Heart left ventricle (tissue), 16 donors: ENCODE measurements at regions of chr16 and their contacts with region 1.

Region 1: GRCh38 chr16:50806099-50807062 is 64.5 kb downstream of the CYLD start:
- DNase-seq: peak; percentile 75 to 83 (median 82)
- ATAC-seq: peak; percentile 85 to 95 (median 92)
- H3K4me3 ChIP-seq: peak overlapping the region in 10 of 12 donors; percentile 21 to 50 (median 39)
- H3K27ac ChIP-seq: peak overlapping the region in 5 of 12 donors; percentile 37 to 68 (median 44)
- H3K4me1 ChIP-seq: peaks cover 0 to 9% (median 3%) of the 10 kb centered on the region in 12 donors
- H3K27me3 ChIP-seq: no peaks in the 10 kb centered on the region
- CTCF ChIP-seq: peak; percentile 84 to 98 (median 94)
- POLR2A ChIP-seq: no peak

Region 2: GRCh38 chr16:50210266-50211038 is 595.9 kb before region 1 on chr16:
- intact Hi-C with region 1: loop called in 3 of 10 experiments (anchors 10 kb)
- DNase-seq: peak; percentile 81 to 89 (median 82)
- ATAC-seq: peak; percentile 92 to 95 (median 94)
- H3K4me3 ChIP-seq: no peak overlapping the region
- H3K27ac ChIP-seq: peak overlapping the region in 3 of 12 donors; percentile 17 to 48 (median 40)
- H3K4me1 ChIP-seq: peaks cover 2 to 54% (median 37%) of the 10 kb centered on the region in 12 donors
- H3K27me3 ChIP-seq: no peaks in the 10 kb centered on the region
- CTCF ChIP-seq: peak; percentile 52 to 88 (median 71)
- POLR2A ChIP-seq: no peak

Region 3: GRCh38 chr16:50368410-50369132 is 437.8 kb before region 1 on chr16 and contains the start of gene BRD7:
- intact Hi-C with region 1: loop called in 4 of 10 experiments (anchors 10 kb)
- DNase-seq: peak; percentile 54 to 85 (median 70)
- ATAC-seq: peak; percentile 34 to 85 (median 68)
- H3K4me3 ChIP-seq: peak within 1 kb of the TSS; percentile 78 to 99 (median 96)
- H3K27ac ChIP-seq: peak within 1 kb of the TSS in 11 of 12 donors; percentile 39 to 82 (median 65)
- H3K4me1 ChIP-seq: peaks cover 7 to 48% (median 22%) of the 10 kb centered on the region in 12 donors
- H3K27me3 ChIP-seq: no peaks in the 10 kb centered on the region
- CTCF ChIP-seq: peak in 10 of 12 donors; percentile 33 to 76 (median 60)
- POLR2A ChIP-seq: no peak
- total RNA-seq, gene BRD7: 29.8 to 49.7 (median 45.3) TPM

Region 4: DNA sequence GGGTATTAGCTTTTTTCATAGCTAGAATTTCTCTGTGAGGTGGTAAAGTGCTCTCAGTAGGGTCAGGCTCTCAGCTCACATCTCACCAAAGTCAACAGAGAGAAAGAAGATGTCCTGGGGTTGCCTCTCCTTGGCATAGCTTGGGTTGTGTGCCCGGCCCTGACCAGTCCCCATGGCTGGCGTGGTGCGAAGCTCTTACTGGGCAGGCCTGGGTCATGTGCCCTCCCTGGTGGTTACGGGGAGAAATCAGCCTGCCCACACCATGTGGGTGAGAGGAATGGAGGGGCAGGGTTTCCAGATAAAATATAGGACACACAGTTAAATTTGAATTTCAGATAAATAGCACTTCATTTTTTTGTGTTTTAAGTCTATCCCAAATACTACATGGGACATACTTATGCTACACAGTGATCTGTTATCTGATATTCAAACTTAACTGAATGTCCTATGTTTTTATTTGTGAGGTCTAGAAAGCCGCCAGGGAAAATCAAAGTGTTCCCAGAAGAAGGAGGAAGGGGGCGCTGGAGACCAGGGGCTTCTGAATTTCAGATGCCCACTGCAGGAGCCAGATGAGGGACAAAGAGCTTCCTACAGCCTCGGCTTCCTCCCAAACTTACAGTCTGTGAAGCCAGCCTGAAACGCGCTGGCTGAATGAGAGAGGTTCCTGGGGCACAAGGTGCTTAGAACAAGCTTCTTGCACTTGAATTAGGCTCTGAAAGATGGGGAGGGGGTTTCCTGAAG is 212.8 kb before region 1 on chr16:
- intact Hi-C with region 1: loop called in 4 of 10 experiments (anchors 5 to 10 kb)
- DNase-seq: peak in 1 of 5 donors; percentile 41
- ATAC-seq: no peak
- H3K4me3 ChIP-seq: no peak overlapping the region
- H3K27ac ChIP-seq: peak overlapping the region in 1 of 12 donors; percentile 53
- H3K4me1 ChIP-seq: peaks cover 0 to 19% (median 10%) of the 10 kb centered on the region in 12 donors
- H3K27me3 ChIP-seq: no peaks in the 10 kb centered on the region
- CTCF ChIP-seq: peak in 9 of 12 donors; percentile 15 to 51 (median 39)
- POLR2A ChIP-seq: no peak

Region 5: GRCh38 chr16:50603206-50604064 is 202.9 kb before region 1 on chr16:
- intact Hi-C with region 1: loop called in 3 of 10 experiments (anchors 10 kb)
- DNase-seq: peak in 1 of 5 donors; percentile 49
- ATAC-seq: peak; percentile 64 to 93 (median 76)
- H3K4me3 ChIP-seq: no peak overlapping the region
- H3K27ac ChIP-seq: peak overlapping the region in 5 of 12 donors; percentile 26 to 89 (median 34)
- H3K4me1 ChIP-seq: peaks cover 0 to 41% (median 14%) of the 10 kb centered on the region in 12 donors
- H3K27me3 ChIP-seq: no peaks in the 10 kb centered on the region
- CTCF ChIP-seq: no peak
- POLR2A ChIP-seq: no peak

Region 6: DNA sequence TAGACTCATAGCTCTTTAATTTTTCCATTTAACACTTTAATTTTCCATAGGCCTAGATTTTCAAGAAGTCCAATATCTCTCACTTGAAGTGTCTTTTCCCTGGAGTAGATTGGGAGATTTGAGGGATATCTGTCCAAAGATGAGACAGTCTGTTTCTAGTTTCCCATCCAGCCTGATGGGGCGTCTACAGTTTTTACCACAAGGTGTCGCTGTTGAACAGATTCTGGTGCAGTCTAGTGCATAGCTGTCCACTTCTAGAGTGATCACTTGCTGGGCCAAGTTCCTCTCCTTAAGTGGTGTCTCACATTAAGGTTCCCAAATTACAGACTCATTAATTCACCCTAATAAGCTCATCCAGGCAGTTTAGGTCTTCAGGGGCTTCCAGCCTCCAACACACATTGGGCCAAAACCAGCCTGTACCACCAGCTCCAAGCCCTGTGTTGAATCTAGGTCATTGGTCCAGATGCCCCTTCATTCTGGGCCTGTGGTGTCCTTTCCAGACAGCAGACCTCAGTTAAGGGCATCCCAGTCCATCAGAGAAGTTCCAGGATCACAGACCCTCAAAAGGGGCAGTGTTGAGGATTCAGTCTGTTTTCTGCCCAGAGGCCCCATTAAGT is 134.6 kb before region 1 on chr16:
- intact Hi-C with region 1: loop called in 9 of 10 experiments (anchors 5 to 10 kb)
- DNase-seq: no peak
- ATAC-seq: no peak
- H3K4me3 ChIP-seq: no peak overlapping the region
- H3K27ac ChIP-seq: no peak overlapping the region
- H3K4me1 ChIP-seq: peaks cover 0 to 22% (median 10%) of the 10 kb centered on the region in 12 donors
- H3K27me3 ChIP-seq: peaks cover 0 to 25% (median 8%) of the 10 kb centered on the region in 9 donors
- CTCF ChIP-seq: peak in 10 of 12 donors; percentile 20 to 49 (median 38)
- POLR2A ChIP-seq: no peak

Region 7: DNA sequence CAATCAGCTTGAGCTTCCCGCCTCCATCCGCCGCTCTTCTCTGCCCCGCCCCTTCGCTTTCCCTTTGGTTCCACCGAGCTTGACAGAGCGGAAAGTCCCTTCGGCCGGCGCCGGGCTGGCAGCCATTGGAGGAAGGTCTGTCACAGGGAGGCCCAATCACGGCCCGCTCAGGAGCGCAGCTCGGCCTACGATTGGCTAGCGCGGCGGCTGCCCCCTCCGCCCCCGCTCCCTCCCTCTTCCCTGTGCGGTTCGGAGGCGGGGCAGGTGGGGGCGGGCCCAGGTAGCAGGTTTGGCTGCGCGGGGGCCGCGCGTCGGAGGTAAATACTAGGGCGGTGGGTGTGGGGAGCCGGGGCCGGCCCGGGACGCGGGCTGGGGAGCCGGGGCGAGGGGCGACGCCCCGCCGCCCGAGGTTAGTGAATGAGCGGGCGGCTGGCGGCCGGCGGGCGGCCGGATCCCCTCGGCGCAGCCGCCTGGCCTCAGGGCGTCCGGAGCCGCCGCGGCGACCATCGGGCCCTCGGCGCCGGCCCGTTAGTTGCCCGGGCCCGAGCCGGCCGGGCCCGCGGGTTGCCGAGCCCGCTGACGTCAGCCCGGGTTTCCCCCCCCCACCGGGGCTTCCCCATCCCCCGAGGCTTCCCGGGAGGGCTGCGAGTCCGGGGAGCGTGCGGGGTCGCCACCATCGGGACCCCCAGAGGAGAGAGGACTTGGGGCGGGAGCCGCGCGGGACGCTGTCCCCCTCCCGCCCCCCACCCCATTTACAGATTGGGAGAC is 64.4 kb before region 1 on chr16 and contains the start of gene CYLD:
- intact Hi-C with region 1: loop called in 1 of 10 experiments (anchors 10 kb)
- DNase-seq: peak; percentile 100
- ATAC-seq: peak; percentile 99 to 100 (median 99)
- H3K4me3 ChIP-seq: peak within 1 kb of the TSS; percentile 70 to 96 (median 92)
- H3K27ac ChIP-seq: peak within 1 kb of the TSS in 11 of 12 donors; percentile 76 to 97 (median 87)
- H3K4me1 ChIP-seq: peaks cover 3 to 45% (median 15%) of the 10 kb centered on the region in 12 donors
- H3K27me3 ChIP-seq: no peaks in the 10 kb centered on the region
- CTCF ChIP-seq: no peak
- POLR2A ChIP-seq: peak in 1 of 2 donors; percentile 43
- total RNA-seq, gene CYLD: 20.2 to 68.8 (median 40.0) TPM